Endothelial cell of umbilical vein (primary cell): ENCODE measurements at regions of chr3 and their contacts with region 1.

Region 1: DNA sequence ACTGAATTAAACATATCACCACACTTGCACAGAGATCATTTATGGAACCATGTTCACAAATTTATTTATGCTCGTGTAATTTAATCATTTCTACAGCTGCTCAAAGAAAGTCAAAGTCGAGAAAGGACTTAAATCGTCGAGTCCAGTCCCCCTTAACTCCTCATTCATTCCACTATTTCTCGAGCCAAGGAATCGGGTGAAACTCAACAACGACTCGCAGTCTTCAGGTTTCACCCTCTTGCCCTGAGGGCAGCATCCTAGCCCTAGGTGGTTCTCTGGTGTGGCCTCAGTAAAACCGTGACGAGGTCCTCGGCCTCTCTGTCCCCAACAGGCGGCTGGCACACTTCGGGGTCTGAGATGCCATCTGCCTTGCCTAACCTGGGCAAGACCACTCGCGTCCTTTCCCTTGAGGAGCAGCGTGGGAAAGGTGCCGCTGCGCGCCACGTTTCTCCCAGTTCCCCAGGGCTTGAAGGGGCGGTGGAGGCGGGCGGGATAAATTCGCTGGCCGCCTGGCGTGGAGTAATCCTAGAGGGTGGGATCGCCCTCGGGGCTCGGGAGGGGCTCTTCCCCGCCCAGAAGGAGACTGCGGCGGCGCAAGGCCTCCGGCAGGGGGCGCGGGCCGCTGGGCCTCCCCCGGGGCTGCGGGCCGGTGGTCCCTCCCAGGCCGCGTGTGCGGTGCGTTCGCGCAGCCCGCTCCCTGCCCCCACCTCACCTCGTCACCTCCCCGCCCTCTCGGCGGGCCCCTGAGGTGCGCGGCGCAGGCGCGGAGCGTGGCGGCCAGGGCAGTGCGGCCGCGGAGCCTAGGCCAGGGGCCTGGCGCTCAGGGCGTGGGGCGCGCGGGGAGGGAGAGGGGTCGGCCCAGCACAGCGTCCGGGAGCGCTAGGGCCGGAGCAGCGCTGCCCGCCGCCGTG is at the start of gene ZNF639:
- DNase-seq: peak; percentile 90
- H3K4me3 ChIP-seq: peak within 1 kb of the TSS; percentile 70 to 90 (median 87)
- H3K27ac ChIP-seq: peak within 1 kb of the TSS; percentile 74
- H3K4me1 ChIP-seq: peaks cover 19% of the 10 kb centered on the region
- H3K27me3 ChIP-seq: no peaks in the 10 kb centered on the region
- CTCF ChIP-seq: peak; percentile 83 to 88
- POLR2A ChIP-seq: peak; percentile 36
- total RNA-seq, gene ZNF639: 28.4 and 30.5 TPM in 2 replicates

Region 2: GRCh38 chr3:178436773-178437172 is 885.8 kb before region 1 on chr3:
- CTCF ChIA-PET with region 1: interaction called, 32 read pairs
- POLR2A ChIA-PET with region 1: no interaction called
- dilution Hi-C with region 1: no loop called
- intact Hi-C with region 1: loop called (anchors 2 kb)
- DNase-seq: peak; percentile 44
- H3K4me3 ChIP-seq: no peak overlapping the region
- H3K27ac ChIP-seq: no peak overlapping the region
- H3K4me1 ChIP-seq: no peaks in the 10 kb centered on the region
- H3K27me3 ChIP-seq: no peaks in the 10 kb centered on the region
- CTCF ChIP-seq: peak; percentile 29 to 42
- POLR2A ChIP-seq: no peak

Region 3: DNA sequence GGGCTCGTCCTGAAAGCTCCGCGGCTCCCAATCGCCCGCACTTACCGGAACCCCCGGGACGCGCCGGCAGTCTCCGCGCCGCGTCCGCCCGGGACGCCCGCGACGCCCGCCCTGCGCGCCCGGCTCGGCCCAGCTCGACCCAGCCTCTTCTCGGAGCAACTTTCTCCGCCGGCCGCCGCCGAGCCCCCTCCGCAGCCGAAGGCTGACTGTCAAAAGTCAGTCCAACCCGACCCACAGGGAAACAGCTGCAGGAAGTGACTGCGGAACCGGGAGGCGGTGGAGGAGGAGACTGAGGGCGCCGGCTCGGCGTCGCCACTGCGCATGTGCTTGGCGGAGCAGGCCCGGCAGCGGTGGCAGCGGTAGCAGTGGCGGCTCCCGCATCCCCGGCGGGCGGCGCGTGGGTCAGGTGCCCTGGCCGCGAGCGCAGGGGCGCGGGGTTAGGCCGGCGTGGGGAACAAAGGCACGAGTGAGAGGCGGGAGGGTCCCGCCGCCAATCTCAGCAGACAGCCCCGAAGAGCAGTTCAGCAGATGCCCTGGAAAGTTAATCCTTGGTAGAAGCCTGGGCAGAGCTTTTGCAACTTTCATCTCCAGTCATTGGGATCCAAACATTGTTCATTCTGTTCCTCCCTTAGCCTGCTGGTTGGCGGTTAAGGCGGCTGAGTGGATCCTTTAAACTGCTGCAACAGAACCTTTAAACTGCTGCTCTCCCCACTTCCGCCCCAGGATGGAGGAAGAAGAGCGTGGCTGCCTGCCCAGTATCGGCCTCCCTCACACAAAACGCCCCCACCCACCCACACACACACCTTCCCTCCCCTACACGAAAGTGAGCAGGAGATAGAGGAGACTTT is 250.8 kb before region 1 on chr3 and contains the start of gene ZMAT3:
- CTCF ChIA-PET with region 1: interaction called, 22 read pairs
- POLR2A ChIA-PET with region 1: no interaction called
- dilution Hi-C with region 1: no loop called
- intact Hi-C with region 1: loop called (anchors 1 kb)
- DNase-seq: peak; percentile 93
- H3K4me3 ChIP-seq: peak within 1 kb of the TSS; percentile 18 to 56 (median 53)
- H3K27ac ChIP-seq: peak within 1 kb of the TSS; percentile 81
- H3K4me1 ChIP-seq: peaks cover 10% of the 10 kb centered on the region
- H3K27me3 ChIP-seq: no peaks in the 10 kb centered on the region
- CTCF ChIP-seq: no peak
- POLR2A ChIP-seq: peak; percentile 89
- total RNA-seq, gene ZMAT3: 33.1 and 35.5 TPM in 2 replicates

Region 4: DNA sequence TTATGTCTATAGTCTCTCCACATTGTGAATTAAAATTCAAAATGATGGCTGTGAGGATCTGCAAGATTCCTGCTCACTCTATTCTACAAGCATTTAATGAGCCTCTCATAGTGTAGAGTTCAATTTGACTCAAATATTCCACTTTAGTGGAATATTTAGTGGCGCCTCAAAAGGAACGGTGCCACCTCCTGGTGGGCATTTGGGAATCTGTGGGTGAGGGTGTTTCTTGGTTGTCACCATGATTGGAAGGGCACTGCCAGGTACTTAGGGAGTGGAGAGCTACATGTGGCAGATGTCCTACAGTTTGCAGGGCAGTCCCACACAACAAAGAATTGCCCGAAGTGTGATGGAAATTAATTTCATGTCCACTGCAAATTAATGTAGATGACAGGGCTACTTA is 50.2 kb before region 1 on chr3:
- CTCF ChIA-PET with region 1: interaction called, 3 read pairs
- POLR2A ChIA-PET with region 1: no interaction called
- dilution Hi-C with region 1: no loop called
- intact Hi-C with region 1: loop called (anchors 2 kb)
- DNase-seq: peak; percentile 49
- H3K4me3 ChIP-seq: no peak overlapping the region
- H3K27ac ChIP-seq: no peak overlapping the region
- H3K4me1 ChIP-seq: peaks cover 11% of the 10 kb centered on the region
- H3K27me3 ChIP-seq: no peaks in the 10 kb centered on the region
- CTCF ChIP-seq: peak; percentile 33 to 34
- POLR2A ChIP-seq: no peak

Region 5: DNA sequence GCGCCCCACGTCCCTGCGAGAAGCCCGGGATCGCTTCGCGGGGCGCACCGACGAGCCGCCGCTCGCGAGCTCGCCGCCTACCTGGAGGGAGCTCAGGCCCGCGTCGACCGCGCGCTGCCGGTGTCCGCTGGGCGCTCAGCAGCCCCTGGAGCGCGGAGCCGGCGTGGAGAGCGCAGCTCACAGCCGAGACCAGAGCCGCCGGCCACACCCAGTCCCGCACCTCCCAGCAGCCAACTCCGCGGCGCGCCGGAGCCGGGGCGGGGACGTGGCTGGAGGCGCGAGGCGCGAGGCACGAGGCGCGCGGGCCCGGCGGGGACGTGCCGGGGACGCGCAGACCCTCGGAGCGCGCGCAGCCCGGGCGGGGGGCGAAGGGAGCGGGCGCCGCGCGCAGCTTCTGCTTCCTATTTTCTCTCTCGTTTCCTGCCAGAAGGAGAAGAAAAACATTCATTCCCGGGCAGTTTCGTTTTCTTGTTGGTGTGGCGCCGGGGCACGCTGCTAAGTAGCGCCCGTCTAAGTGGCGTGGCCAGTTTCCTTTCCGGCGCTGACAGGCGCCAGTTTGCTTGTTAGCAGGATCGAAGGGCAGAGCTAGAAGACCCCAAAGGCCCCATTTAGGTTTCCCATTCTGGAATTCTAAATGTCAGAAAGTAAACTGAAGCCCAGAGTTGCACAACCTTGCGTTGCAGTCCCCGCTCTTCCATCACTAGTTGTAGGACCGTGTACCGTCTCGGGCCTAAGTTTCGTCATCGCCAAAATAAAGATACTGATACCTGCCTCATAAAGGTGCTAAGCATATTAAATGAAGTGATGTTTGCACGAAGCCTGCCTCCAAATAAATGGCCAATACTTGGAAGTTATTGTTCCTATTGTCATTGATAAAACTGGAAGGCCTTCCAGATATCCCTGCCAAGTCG is 129.0 kb after region 1 on chr3 and contains the start of gene GNB4:
- CTCF ChIA-PET with region 1: no interaction called
- POLR2A ChIA-PET with region 1: no interaction called
- dilution Hi-C with region 1: no loop called
- intact Hi-C with region 1: loop called (anchors 2 kb)
- DNase-seq: peak; percentile 96
- H3K4me3 ChIP-seq: peak within 1 kb of the TSS; percentile 43 to 93 (median 92)
- H3K27ac ChIP-seq: peak within 1 kb of the TSS; percentile 95
- H3K4me1 ChIP-seq: peaks cover 29% of the 10 kb centered on the region
- H3K27me3 ChIP-seq: no peaks in the 10 kb centered on the region
- CTCF ChIP-seq: no peak
- POLR2A ChIP-seq: peak; percentile 87
- total RNA-seq, gene GNB4: 61.9 and 62.6 TPM in 2 replicates